ENCODE measurements at regions of chr14 and their contacts with region 1.

Region 1: GRCh38 chr14:21039585-21040369 is 2.4 kb upstream of the RNASE7 start:
- DNase-seq: peak; percentile 66
- H3K4me3 ChIP-seq: no peak overlapping the region
- H3K27ac ChIP-seq: no peak overlapping the region
- H3K4me1 ChIP-seq: peaks cover 58% of the 10 kb centered on the region
- H3K27me3 ChIP-seq: no peaks in the 10 kb centered on the region
- CTCF ChIP-seq: peak; percentile 67 to 82

Region 2: GRCh38 chr14:20343092-20343861 is 696.5 kb before region 1 on chr14 and contains the start of gene PARP2:
- CTCF ChIA-PET with region 1: no interaction called
- dilution Hi-C with region 1: no loop called
- in situ Hi-C with region 1: no loop called
- intact Hi-C with region 1: loop called (anchors 2 kb)
- DNase-seq: peak; percentile 100
- H3K4me3 ChIP-seq: peak within 1 kb of the TSS; percentile 85 to 97 (median 86)
- H3K27ac ChIP-seq: peak within 1 kb of the TSS; percentile 97
- H3K4me1 ChIP-seq: no peaks in the 10 kb centered on the region
- H3K27me3 ChIP-seq: no peaks in the 10 kb centered on the region
- CTCF ChIP-seq: no peak
- total RNA-seq, gene PARP2: 5.8 to 29.3 TPM

Region 3: DNA sequence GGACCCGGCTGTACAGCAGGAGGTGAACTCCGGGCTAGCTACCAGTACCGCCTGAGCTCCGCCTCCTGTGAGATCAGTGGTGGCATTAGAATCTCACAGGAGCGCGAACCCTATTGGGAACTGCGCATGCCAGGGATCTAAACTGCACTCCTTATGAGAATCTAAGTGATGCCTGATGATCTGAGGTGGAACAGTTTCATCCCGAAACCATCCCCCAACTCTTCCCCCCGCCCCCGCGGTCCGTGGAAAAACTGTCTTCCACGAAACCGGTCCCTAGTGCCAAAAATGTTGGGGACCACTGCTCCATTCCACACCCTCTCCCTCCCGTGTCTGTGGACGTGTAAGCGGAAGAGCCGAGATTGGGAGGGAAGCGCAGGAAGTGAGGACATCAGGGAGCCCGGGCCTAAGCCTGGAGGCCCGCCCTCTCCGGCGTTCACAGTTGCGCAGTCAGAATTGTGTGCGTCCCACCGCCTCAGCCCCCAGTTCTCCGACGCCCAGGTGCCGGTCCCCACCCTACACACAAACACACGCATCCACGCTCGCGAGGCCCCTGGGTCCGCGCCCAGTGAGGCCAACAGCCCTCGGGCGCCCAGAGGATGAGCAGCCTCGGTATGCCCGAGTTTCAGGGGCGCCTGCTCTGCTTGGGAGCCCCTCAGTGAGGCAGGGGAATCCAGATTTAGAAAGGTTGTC is 357.2 kb before region 1 on chr14:
- CTCF ChIA-PET with region 1: no interaction called
- dilution Hi-C with region 1: no loop called
- in situ Hi-C with region 1: no loop called
- intact Hi-C with region 1: loop called (anchors 2 kb)
- DNase-seq: peak; percentile 87
- H3K4me3 ChIP-seq: peak overlapping the region; percentile 87 to 91 (median 89)
- H3K27ac ChIP-seq: peak overlapping the region; percentile 92
- H3K4me1 ChIP-seq: peaks cover 22% of the 10 kb centered on the region
- H3K27me3 ChIP-seq: no peaks in the 10 kb centered on the region
- CTCF ChIP-seq: peak in 1 of 2 donors; percentile 31

Region 4: DNA sequence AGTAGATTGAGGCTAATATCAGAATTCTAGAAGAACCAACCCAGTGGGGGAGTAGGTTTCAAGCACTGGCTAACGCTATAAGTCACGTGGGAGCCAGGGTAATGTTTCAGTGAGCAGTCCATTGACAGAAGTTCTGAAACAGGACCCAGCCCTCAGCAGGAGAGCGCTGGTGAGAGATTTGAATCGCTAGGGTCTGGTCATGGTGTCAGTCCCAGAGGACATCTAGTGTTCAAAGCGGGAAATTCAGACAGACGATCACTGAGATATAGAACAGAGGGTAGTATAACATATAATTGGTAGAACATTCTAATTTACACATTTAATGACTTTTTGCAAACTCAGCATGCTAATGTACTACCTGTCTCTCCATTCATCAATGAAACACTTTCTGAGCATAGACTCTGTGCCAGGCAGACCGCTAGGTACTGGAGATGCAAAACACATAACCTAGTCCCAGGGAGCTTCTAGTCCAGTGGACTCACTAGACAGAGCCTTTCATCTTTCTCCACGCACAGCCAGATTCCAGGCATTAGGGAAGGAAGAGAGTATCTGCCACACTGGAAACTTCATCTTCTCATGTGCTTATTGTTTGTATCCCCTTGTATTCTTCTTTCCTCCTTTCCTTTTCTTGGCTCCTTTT is 184.0 kb before region 1 on chr14:
- CTCF ChIA-PET with region 1: interaction called, 9 read pairs
- dilution Hi-C with region 1: no loop called
- in situ Hi-C with region 1: no loop called
- intact Hi-C with region 1: loop called (anchors 1 kb)
- DNase-seq: peak; percentile 62
- H3K4me3 ChIP-seq: no peak overlapping the region
- H3K27ac ChIP-seq: no peak overlapping the region
- H3K4me1 ChIP-seq: peaks cover 4% of the 10 kb centered on the region
- H3K27me3 ChIP-seq: peaks cover 2% of the 10 kb centered on the region
- CTCF ChIP-seq: peak; percentile 59 to 76

Region 5: GRCh38 chr14:20989572-20990551 is 49.9 kb before region 1 on chr14 and contains the start of gene METTL17:
- CTCF ChIA-PET with region 1: no interaction called
- dilution Hi-C with region 1: no loop called
- in situ Hi-C with region 1: no loop called
- intact Hi-C with region 1: loop called (anchors 1 kb)
- DNase-seq: peak; percentile 97
- H3K4me3 ChIP-seq: peak within 1 kb of the TSS; percentile 88 to 99 (median 96)
- H3K27ac ChIP-seq: peak within 1 kb of the TSS; percentile 86
- H3K4me1 ChIP-seq: peaks cover 34% of the 10 kb centered on the region
- H3K27me3 ChIP-seq: no peaks in the 10 kb centered on the region
- CTCF ChIP-seq: peak; percentile 33 to 53
- total RNA-seq, gene METTL17: 44.6 to 47.8 TPM

Region 6: GRCh38 chr14:21057803-21058675 is 18.3 kb after region 1 on chr14 and contains the start of gene RNASE8:
- CTCF ChIA-PET with region 1: no interaction called
- dilution Hi-C with region 1: no loop called
- in situ Hi-C with region 1: no loop called
- intact Hi-C with region 1: loop called (anchors 2 kb)
- DNase-seq: peak; percentile 48
- H3K4me3 ChIP-seq: no peak within 1 kb of the TSS
- H3K27ac ChIP-seq: no peak within 1 kb of the TSS
- H3K4me1 ChIP-seq: peaks cover 4% of the 10 kb centered on the region
- H3K27me3 ChIP-seq: no peaks in the 10 kb centered on the region
- CTCF ChIP-seq: no peak
- total RNA-seq, gene RNASE8: not detected

Region 7: DNA sequence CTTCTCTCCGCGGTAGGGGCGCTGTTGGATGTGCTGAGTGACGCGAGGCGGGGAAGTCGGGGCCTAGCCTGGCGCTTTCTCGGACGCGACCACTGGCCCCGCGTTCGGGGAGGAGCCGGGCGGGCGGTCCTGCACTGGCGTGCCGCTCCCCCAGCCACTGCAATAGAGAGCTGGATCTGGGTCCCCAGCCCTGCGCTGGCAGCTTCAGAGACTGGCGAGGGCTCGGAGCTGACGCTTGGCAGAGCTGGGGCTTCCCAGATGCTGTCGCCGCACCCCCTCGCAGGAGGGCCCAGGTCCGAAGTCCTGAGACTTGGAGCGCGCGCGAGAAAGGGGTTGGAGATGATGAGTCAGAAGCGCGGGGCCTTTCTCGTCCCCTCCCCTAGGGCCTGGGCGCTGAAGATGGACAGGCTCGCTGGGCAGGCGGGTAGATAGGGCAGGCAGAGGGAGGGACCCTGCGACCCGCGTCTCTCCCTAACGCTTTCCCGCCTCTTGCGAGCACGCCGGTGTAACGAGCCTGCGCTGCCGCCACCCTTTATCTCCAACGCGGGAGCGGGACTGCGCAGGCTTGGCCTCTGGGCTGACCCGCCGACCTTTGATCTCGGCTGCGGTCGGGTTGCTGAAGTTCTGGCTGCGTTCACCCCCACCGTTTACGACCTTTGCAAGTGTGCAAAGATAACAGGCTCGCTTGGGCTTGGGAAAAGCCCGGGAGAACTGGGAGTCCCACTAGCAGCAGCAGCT is 64.1 kb after region 1 on chr14:
- CTCF ChIA-PET with region 1: no interaction called
- dilution Hi-C with region 1: no loop called
- in situ Hi-C with region 1: no loop called
- intact Hi-C with region 1: loop called (anchors 1 kb)
- DNase-seq: peak; percentile 94
- H3K4me3 ChIP-seq: peak overlapping the region; percentile 32 to 85 (median 58)
- H3K27ac ChIP-seq: peak overlapping the region; percentile 86
- H3K4me1 ChIP-seq: peaks cover 62% of the 10 kb centered on the region
- H3K27me3 ChIP-seq: no peaks in the 10 kb centered on the region
- CTCF ChIP-seq: peak; percentile 73 to 86

Region 8: GRCh38 chr14:21136024-21136423 is 96.2 kb after region 1 on chr14:
- CTCF ChIA-PET with region 1: no interaction called
- dilution Hi-C with region 1: no loop called
- in situ Hi-C with region 1: no loop called
- intact Hi-C with region 1: no loop called
- DNase-seq: no peak
- H3K4me3 ChIP-seq: no peak overlapping the region
- H3K27ac ChIP-seq: no peak overlapping the region
- H3K4me1 ChIP-seq: no peaks in the 10 kb centered on the region
- H3K27me3 ChIP-seq: no peaks in the 10 kb centered on the region
- CTCF ChIP-seq: peak; percentile 62 to 64